BJ (cell line): ENCODE measurements at regions of chr7 and their contacts with region 1.

Region 1: DNA sequence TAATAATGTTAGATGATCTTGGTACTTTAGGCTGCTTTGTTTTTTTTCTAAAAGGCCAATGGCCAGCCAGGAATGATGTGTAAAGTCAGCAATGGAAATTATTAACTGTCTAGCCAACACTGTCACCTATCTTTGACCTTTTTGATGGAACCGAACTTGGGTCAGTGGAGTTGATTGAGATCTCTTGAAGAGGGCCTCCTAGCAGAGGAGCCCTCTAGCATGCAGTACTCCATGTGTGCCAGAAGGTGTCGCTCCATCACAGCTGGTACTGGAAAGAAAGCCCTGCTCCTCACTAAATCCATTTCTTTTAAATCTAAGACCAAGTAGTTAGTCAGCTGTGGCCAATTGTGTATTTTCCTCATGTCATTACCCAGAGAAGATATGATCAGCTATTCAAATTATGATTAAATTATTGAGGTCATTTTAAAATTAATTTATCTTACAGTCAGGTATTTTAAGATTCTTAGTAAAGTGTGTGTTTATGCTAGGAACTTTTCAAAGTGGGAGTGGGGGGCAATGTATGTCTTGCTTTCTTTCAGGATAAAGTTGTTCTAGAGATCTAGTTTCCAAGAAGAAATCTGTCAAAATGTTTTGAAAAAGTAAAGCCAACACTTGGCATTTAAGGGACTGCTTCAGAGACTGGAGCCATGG is 33.1 kb upstream of the CROT start:
- DNase-seq: peak; percentile 9
- H3K4me3 ChIP-seq: no peak overlapping the region
- H3K27me3 ChIP-seq: no peaks in the 10 kb centered on the region
- CTCF ChIP-seq: peak; percentile 98

Region 2: DNA sequence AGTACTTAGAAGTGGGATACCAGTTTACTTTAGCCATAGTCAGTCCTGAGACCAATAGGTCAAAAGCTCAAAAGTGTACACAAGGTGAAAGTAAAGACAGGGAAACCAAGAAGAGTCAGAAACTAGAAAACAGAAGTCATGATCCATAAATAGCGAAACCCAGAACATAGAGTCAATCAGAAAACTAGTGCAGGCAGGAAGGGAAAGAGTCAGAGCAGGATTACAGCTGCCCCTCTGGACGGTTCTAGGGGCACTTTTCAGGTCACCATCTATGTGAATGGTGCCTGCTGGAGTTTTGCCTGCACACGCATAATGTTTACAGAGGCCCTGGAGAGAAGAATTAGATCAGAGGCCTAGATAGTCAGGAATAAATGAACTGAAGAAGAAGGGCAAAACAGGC is 182.5 kb before region 1 on chr7:
- CTCF ChIA-PET with region 1: no interaction called
- POLR2A ChIA-PET with region 1: no interaction called
- DNase-seq: no peak
- H3K4me3 ChIP-seq: no peak overlapping the region
- H3K27me3 ChIP-seq: no peaks in the 10 kb centered on the region; the same call in 1 of the 2 replicates
- CTCF ChIP-seq: no peak

Region 3: GRCh38 chr7:87411186-87411585 is 98.8 kb after region 1 on chr7:
- CTCF ChIA-PET with region 1: interaction called, 356 read pairs
- POLR2A ChIA-PET with region 1: no interaction called
- DNase-seq: no peak
- H3K4me3 ChIP-seq: no peak overlapping the region
- H3K27me3 ChIP-seq: no peaks in the 10 kb centered on the region
- CTCF ChIP-seq: no peak

Region 4: GRCh38 chr7:87416682-87417587 is 104.6 kb after region 1 on chr7:
- CTCF ChIA-PET with region 1: interaction called, 356 read pairs
- POLR2A ChIA-PET with region 1: no interaction called
- DNase-seq: no peak
- H3K4me3 ChIP-seq: no peak overlapping the region
- H3K27me3 ChIP-seq: no peaks in the 10 kb centered on the region
- CTCF ChIP-seq: peak; percentile 49

Region 5: GRCh38 chr7:87424075-87424474 is 111.7 kb after region 1 on chr7:
- CTCF ChIA-PET with region 1: interaction called, 356 read pairs
- POLR2A ChIA-PET with region 1: no interaction called
- DNase-seq: no peak
- H3K4me3 ChIP-seq: no peak overlapping the region
- H3K27me3 ChIP-seq: no peaks in the 10 kb centered on the region; the same call in 1 of the 2 replicates
- CTCF ChIP-seq: no peak